Breast epithelium (tissue), 4 donors: ENCODE measurements at regions of chr18 and their contacts with region 1.

Region 1: DNA sequence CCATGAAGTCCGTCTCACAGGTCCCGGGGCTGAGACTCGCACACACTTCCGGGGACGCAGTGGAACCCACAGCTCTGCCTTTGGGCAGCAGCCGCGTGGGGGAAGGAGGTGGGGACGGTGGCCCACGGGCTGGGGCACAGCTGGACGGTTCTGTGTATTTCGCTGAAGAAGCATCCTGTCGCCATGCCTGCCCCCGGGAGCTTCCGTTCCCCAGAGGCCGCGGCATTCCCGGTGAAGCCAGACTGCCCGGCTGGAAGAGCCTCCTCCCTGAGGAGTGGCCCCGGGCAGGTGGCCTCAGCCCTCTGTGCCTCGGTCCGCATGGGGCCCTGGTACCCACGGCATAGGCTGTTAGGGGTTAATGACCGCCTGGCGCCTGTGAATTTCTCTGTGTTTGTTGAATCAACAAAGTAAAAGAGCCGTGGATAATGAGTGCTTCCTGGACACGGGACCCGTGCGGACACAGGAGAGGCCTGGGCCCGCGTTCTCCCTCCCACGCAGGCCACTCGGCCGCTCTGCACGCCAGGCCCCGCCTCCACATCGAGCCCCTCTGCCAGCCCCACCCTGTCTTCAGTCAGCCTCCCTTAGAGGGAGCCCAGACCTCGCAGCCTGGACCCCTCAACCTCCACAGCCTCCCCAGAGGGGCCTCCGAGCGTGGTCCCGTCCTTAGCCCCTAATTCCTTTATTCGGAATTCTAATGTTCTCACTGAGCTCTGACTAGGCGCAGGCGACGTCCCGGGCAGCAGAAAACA is 51.0 kb downstream of the KCNG2 start:
- DNase-seq: peak in 1 of 2 donors; percentile 50
- H3K4me3 ChIP-seq: no peak overlapping the region
- H3K27ac ChIP-seq: no peak overlapping the region
- H3K4me1 ChIP-seq: no peaks in the 10 kb centered on the region
- H3K27me3 ChIP-seq: no peaks in the 10 kb centered on the region
- CTCF ChIP-seq: no peak
- POLR2A ChIP-seq: no peak

Region 2: DNA sequence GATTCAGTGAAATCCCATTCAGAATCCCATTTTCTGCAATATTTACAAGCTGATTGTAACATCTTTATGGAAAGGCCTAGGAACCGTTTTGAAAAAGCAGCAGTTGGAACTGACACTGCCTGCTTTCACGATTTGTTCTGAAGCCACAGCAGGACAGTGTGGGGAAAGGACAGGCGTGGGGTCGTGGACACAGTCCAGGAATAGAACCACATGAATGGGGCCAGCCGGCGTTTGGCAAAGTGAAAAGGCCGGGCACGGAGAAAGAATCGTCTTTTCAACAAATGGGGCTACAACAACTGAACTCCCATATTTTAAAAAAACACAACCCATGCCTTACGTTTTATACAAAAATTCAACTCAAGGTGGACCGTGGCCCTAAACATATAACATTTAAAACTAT is 32.9 kb after region 1 on chr18:
- intact Hi-C with region 1: loop called (anchors 1 kb)
- DNase-seq: no peak
- H3K4me3 ChIP-seq: no peak overlapping the region
- H3K27ac ChIP-seq: no peak overlapping the region
- H3K4me1 ChIP-seq: no peaks in the 10 kb centered on the region
- H3K27me3 ChIP-seq: peaks cover 0 to 25% of the 10 kb centered on the region in 2 donors
- CTCF ChIP-seq: no peak
- POLR2A ChIP-seq: no peak